ENCODE measurements at regions of chr12 and their contacts with region 1.

Region 1: DNA sequence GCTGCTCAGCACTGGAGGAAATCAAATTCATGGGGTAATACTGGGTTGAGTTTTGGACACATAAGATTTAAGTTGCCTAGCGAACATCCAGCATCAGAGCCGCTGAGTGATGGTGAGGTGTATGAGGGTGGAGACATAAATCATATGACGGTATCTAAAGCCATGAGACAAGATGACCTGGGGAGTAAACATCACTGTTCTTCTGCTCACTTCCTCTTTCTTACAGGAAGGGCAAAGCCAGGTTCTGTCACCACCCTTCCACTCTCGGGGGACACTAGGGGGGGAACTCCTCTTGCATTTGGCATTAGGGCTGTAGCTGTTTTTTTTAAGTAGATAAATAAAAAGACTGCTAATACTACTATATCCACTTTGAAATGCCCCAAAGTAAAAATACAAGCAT is 24.0 kb downstream of the PRDM4 start:
- DNase-seq: no peak

Region 2: GRCh38 chr12:107685360-107686248 is 51.3 kb before region 1 on chr12 and contains the start of gene PWP1:
- in situ Hi-C with region 1: loop called (anchors 5 kb)
- DNase-seq: peak; percentile 93
- total RNA-seq, gene PWP1: 30.9 and 38.2 TPM in 2 replicates